Mammary epithelial cell (primary cell): ENCODE measurements at regions of chr7 and their contacts with region 1.

Region 1: DNA sequence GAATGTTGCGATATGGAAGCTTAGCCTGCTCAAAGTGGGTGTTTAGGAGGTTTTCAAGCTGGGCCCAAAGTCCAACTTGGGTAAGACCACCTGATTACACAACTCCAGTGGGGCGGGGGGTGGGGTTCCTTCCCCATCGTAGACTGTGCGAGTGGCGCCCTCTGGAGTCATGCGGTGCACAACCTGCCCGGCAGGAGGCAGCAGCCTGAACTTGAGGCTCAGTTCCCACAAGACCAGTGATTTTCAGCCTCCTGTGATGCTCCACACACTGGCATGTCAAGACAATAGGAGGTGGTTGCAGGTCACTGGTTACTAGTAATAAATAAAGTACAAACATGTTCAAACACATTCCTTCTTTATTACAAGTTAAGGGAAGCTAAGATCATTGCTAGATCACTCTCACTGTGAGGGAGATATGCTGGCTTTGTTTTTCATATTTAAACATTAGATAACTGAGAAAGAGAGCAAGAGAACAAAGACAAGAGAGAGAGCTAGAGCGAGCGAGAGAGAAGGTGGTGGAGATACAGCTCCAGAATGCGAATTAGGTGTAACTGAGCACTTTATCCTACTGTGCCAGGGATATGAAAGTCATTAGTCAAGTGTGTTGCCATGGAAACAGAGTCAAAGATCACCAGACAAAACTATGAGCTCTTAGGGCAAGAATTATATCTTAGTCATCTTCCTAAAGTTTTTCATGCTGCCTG is 97.4 kb upstream of the BMPER start:
- DNase-seq: peak; percentile 95
- H3K4me3 ChIP-seq: no peak overlapping the region
- H3K27ac ChIP-seq: peak overlapping the region; percentile 99
- H3K4me1 ChIP-seq: peaks cover 28% of the 10 kb centered on the region
- H3K27me3 ChIP-seq: no peaks in the 10 kb centered on the region
- CTCF ChIP-seq: peak; percentile 93 to 94

Region 2: DNA sequence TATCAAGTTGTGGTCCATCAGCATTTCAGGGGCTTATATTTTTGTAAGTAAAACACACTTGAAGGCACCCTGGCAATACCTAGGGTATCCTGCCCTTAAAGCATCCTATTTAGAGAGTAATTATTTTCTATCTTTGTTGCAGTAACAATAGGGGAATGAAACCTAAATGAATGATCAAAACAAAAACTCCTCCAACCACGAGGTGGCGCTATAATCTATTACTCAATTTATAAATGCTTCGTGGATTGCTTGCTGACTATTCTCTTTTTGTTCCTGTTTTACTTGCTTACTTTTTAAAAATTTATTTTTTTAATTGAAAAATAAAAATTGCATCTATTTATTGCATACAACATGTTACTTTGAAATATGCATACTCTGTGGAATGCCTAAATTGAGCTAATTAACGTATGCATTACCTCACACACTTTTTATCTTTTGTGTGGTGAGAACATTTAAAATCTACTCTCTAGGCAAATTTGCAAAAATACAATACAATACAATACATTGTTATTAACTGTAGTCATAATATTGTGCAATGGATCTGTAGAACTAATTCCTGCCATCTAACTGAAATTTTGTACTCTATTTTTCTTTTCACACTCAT is 50.3 kb before region 1 on chr7:
- CTCF ChIA-PET with region 1: interaction called, 4 read pairs
- dilution Hi-C with region 1: no loop called
- in situ Hi-C with region 1: no loop called
- intact Hi-C with region 1: loop called (anchors 5 kb)
- DNase-seq: peak; percentile 10
- H3K4me3 ChIP-seq: no peak overlapping the region
- H3K27ac ChIP-seq: no peak overlapping the region
- H3K4me1 ChIP-seq: no peaks in the 10 kb centered on the region
- H3K27me3 ChIP-seq: no peaks in the 10 kb centered on the region
- CTCF ChIP-seq: peak; percentile 57 to 58

Region 3: DNA sequence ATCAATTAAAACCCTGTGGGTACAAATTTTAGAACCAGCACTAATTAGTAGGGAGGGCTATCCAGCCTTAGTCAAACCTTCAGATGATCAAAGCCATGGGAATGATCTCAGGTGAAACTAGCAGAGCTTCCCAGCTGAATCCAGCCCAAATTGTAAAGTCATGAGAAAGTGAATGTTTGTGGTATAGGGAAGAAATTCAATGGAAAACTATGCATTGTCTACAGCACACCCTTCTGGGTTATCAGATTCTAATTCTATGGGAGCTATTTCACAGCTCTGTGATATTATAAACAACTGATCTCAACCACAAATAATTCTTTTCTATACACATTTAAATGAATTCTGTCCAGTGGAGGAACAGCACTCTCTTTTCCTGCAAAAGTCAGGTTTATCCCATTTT is 72.9 kb after region 1 on chr7:
- CTCF ChIA-PET with region 1: interaction called, 3 read pairs
- dilution Hi-C with region 1: no loop called
- in situ Hi-C with region 1: no loop called
- intact Hi-C with region 1: loop called (anchors 2 kb)
- DNase-seq: peak; percentile 89
- H3K4me3 ChIP-seq: no peak overlapping the region
- H3K27ac ChIP-seq: peak overlapping the region; percentile 73
- H3K4me1 ChIP-seq: peaks cover 38% of the 10 kb centered on the region
- H3K27me3 ChIP-seq: no peaks in the 10 kb centered on the region
- CTCF ChIP-seq: no peak

Region 4: GRCh38 chr7:33946094-33946700 is 138.3 kb after region 1 on chr7:
- CTCF ChIA-PET with region 1: no interaction called
- dilution Hi-C with region 1: no loop called
- in situ Hi-C with region 1: no loop called
- intact Hi-C with region 1: no loop called
- DNase-seq: peak; percentile 59
- H3K4me3 ChIP-seq: no peak overlapping the region
- H3K27ac ChIP-seq: no peak overlapping the region
- H3K4me1 ChIP-seq: no peaks in the 10 kb centered on the region
- H3K27me3 ChIP-seq: no peaks in the 10 kb centered on the region
- CTCF ChIP-seq: no peak